Activated CD4-positive, alpha-beta T cell treated with anti-CD3 and anti-CD28 coated beads for 36 hours (primary cell): ENCODE measurements at regions of chr9 and their contacts with region 1.

Region 1: GRCh38 chr9:99819856-99820684 is 1.6 kb upstream of the NR4A3 start:
- DNase-seq: peak; percentile 95
- ATAC-seq: peak; percentile 39
- H3K4me3 Mint-ChIP-seq: peak overlapping the region; percentile 88
- H3K27ac Mint-ChIP-seq: peak overlapping the region; percentile 94
- H3K4me1 Mint-ChIP-seq: peaks cover 42% of the 10 kb centered on the region
- H3K27me3 Mint-ChIP-seq: peaks cover 4% of the 10 kb centered on the region

Region 2: DNA sequence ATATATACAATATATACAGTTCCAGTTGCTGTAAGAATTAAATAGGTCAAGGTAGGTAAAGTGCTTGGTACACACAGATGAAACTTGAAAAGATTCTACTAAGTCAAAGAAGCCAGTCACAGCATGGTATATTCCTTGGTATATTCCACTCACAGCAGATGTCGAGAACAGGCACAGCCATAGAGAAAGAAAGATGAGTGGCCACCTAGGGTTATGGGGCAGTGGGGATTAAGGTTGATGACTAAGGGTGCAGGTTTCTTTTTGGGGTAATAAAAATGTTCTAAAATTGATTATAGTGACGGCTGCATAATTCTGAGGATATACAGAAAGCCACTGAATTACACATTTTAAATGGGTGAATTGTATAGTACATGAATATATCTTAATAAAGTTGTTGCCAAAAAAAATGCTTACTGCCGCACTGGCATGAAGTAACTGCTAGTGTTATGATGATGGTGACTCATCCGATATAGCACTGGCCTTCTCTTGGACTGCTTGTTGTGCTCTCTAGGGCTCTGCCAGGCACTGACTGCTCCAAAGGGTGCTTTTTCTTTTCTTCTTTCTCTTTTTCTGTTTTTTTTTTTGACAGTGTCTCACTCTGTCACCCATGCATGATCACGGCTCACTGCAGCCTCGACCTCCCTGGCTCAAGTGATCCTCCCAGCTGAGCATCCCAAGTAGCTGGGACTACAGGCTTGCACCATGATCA is 1588.1 kb before region 1 on chr9:
- CTCF ChIA-PET with region 1: no interaction called
- POLR2A ChIA-PET with region 1: no interaction called
- intact Hi-C with region 1: no loop called
- DNase-seq: no peak
- ATAC-seq: no peak
- H3K4me3 Mint-ChIP-seq: no peak overlapping the region
- H3K27ac Mint-ChIP-seq: no peak overlapping the region
- H3K4me1 Mint-ChIP-seq: no peaks in the 10 kb centered on the region
- H3K27me3 Mint-ChIP-seq: no peaks in the 10 kb centered on the region

Region 3: DNA sequence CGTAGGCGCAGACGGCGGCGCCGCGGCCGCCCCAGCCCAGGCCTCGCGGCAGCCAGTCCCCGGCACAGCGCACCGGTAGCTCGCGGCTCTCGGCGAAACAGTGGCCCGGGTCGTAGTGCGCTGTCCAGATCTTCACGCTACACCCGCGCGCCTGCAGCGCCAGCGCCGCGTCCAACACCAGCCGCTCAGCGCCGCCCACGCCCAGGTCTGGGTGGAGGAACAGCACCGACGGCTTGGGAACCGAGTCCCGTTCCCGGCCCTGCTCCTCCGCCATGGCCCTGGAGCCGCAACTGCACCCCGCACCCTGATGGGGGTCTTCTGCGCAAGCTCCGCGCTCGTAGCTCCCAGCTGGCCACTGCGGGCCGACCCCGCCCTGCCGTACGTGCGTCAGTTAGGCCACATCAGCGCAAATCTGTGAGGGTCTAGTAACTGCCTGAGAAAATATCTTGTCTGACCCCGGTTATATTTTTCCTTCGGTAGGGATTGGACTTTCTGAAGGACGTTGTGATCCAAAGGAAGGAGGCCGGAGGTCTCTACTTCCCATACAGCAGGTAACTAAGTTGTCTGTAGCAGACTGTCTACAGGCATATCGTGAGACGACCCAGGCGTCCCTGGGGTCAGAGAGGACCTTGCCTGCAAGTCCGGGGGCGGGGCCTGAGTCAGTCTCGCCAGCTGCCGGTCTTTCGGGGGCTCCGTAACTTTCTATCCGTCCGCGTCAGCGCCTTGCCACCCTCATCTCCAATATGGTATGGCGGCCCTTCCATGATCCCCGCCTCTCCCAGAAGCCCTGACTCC is 598.3 kb before region 1 on chr9 and contains the starts of genes ALG2 and SEC61B:
- CTCF ChIA-PET with region 1: no interaction called
- POLR2A ChIA-PET with region 1: no interaction called
- intact Hi-C with region 1: loop called in 1 of 2 experiments (anchors 1 kb)
- DNase-seq: peak; percentile 97
- ATAC-seq: peak; percentile 94
- H3K4me3 Mint-ChIP-seq: peak within 1 kb of the TSS; percentile 99
- H3K27ac Mint-ChIP-seq: peak within 1 kb of the TSS; percentile 99
- H3K4me1 Mint-ChIP-seq: peaks cover 67% of the 10 kb centered on the region
- H3K27me3 Mint-ChIP-seq: no peaks in the 10 kb centered on the region
- total RNA-seq, gene ALG2: 22.8 to 31.1 TPM
- total RNA-seq, gene SEC61B: 81.0 to 139 TPM

Region 4: DNA sequence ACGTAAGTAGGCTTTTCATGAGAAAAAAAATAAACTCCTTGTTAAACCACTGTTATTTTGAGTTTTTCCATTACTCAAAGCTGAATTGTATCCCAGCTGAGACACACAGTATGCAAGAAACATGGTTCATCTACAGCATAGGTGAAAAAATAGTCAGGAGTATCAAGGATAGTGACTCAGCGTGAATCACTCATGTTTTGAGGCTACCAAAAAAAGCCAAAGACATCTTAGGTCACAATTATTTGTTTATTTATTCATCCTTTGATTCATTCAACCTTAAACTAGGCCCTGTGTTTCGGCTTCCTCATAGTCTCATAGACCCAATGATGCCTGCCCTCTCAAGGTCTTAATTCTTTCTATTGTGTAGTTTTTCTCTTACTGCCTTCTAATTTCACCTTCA is 53.5 kb after region 1 on chr9:
- CTCF ChIA-PET with region 1: interaction called, 4 read pairs
- POLR2A ChIA-PET with region 1: no interaction called
- intact Hi-C with region 1: loop called in 1 of 2 experiments (anchors 5 kb)
- DNase-seq: no peak
- ATAC-seq: peak; percentile 76
- H3K4me3 Mint-ChIP-seq: no peak overlapping the region
- H3K27ac Mint-ChIP-seq: peak overlapping the region; percentile 44
- H3K4me1 Mint-ChIP-seq: peaks cover 18% of the 10 kb centered on the region
- H3K27me3 Mint-ChIP-seq: peaks cover 2% of the 10 kb centered on the region

Region 5: DNA sequence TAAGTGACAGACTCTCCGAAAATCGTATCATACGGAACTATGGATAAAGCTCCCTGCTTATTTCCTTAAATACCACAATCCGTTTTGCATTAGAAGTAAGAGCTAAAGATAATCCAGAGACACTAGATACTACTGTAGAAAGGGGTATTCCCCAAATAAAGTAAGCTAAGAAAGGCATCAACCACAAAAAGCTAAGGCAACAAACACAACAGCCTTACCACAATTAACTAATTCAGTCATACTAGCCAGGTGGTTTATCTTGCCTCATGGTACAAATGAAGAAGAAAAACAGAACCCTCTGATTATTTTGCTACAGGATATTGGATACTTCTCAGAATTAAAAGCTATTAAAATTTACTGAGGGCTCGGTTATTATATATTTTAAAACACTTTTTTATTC is 264.7 kb after region 1 on chr9:
- CTCF ChIA-PET with region 1: no interaction called
- POLR2A ChIA-PET with region 1: no interaction called
- intact Hi-C with region 1: loop called (anchors 5 to 10 kb)
- DNase-seq: no peak
- ATAC-seq: peak; percentile 62
- H3K4me3 Mint-ChIP-seq: no peak overlapping the region
- H3K27ac Mint-ChIP-seq: no peak overlapping the region
- H3K4me1 Mint-ChIP-seq: peaks cover 80% of the 10 kb centered on the region
- H3K27me3 Mint-ChIP-seq: no peaks in the 10 kb centered on the region

Region 6: DNA sequence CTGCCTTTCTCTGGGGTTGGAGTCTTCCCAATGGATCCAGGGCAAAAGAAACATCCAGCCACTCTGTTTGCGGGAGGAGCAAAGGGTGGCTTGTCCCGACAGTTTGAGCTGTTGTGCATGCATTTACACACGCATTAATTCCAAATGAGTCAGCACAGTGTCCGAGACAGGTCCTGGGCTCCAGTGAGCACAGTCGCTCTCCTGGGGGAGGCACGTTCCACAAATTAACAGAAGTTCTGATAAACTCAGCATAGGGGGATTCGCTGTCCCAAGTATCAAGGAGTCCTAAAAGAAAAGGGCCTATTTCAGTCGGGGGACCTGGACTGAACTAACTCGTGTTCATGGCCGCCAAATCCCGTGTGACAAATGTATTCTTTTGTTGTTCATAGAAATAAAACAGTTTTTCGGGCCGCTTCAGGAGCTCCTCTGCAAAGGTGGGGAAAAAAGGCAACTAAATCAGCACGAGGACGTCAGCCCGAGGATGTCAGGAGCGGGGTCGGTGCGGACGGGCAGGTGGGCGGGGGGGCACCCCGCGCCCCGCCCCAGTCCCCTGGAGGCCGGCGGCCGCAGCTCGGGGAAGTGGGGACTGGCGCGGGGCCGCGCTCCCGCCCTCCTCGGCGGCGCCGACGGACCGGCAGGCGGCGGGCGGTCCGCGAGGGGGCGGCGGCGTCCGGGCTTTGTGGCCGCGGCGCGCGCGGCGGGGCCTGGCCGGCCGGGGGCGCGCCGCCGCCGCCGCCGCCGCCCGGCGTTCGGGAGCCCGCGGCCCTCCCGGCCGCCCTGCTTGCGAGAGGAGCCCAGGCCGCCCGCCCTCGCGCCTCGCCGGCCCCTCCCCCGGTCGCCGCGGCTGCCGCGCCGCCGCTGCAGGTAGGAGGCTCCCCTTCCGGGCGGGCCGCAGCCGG is 606.7 kb after region 1 on chr9 and contains the start of gene MSANTD3:
- CTCF ChIA-PET with region 1: no interaction called
- POLR2A ChIA-PET with region 1: no interaction called
- intact Hi-C with region 1: loop called in 1 of 2 experiments (anchors 5 kb)
- DNase-seq: peak; percentile 71
- ATAC-seq: peak; percentile 74
- H3K4me3 Mint-ChIP-seq: peak within 1 kb of the TSS; percentile 81
- H3K27ac Mint-ChIP-seq: peak within 1 kb of the TSS; percentile 91
- H3K4me1 Mint-ChIP-seq: peaks cover 30% of the 10 kb centered on the region
- H3K27me3 Mint-ChIP-seq: no peaks in the 10 kb centered on the region
- total RNA-seq, gene MSANTD3: 17.9 to 21.6 TPM